ENCODE measurements at regions of chr17 and their contacts with region 1.

Region 1: DNA sequence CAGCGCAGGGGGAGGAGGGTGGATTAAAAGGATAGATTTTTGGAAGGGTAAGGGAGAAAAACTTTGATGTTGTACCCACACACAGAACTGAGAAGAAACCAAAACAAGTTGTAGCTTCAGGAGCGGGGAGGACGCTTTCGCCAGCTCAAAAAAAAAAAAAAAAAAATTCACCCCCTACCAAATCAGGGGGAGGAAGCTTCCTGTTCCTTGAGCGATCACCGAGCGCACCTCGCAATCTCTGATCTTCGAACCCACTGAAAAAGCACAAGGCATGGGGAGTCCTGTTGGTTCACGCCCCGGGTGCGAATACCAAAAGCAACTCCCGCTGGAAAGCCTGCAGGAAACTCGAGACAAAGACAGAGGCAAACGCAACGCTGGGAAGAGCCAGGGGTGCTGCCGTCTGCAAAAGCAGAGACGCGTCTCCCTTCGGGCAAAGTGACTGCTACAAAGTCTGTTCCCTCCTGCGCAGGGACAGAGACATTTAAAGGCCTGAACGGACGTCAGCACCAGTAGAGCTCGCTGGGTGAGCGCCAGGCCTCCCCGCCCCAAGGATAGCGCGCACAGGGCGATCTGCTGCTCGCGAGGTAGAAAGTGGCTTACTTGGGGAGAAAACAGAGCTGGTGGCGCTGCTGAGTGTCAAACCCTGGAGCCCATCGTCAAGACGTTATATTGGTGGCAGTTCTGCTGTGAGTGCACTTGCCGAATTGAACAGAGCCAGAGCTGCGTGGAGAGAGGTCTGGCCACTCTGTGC is 190.4 kb downstream of the USP22 start:
- DNase-seq: peak; percentile 70 to 71
- H3K4me3 ChIP-seq: peak overlapping the region; percentile 20
- H3K4me3 Mint-ChIP-seq: peak overlapping the region; percentile 75
- H3K27ac Mint-ChIP-seq: no peak overlapping the region
- H3K4me1 ChIP-seq: no peaks in the 10 kb centered on the region
- H3K4me1 Mint-ChIP-seq: peaks cover 9% of the 10 kb centered on the region
- H3K27me3 ChIP-seq: no peaks in the 10 kb centered on the region
- H3K27me3 Mint-ChIP-seq: peaks cover 20% of the 10 kb centered on the region
- CTCF ChIP-seq: peak in 1 of 2 experiments; percentile 8

Region 2: GRCh38 chr17:20226814-20227482 is 625.5 kb before region 1 on chr17:
- CTCF ChIA-PET with region 1: no interaction called
- POLR2A ChIA-PET with region 1: no interaction called
- intact Hi-C with region 1: loop called (anchors 10 kb)
- DNase-seq: peak; percentile 74 to 83
- H3K4me3 ChIP-seq: no peak overlapping the region
- H3K4me3 Mint-ChIP-seq: no peak overlapping the region
- H3K27ac Mint-ChIP-seq: peak overlapping the region; percentile 50
- H3K4me1 ChIP-seq: peaks cover 25% of the 10 kb centered on the region
- H3K4me1 Mint-ChIP-seq: peaks cover 29% of the 10 kb centered on the region
- H3K27me3 ChIP-seq: no peaks in the 10 kb centered on the region
- H3K27me3 Mint-ChIP-seq: no peaks in the 10 kb centered on the region
- CTCF ChIP-seq: peak; percentile 83 to 89

Region 3: GRCh38 chr17:20800146-20800545 is 52.3 kb before region 1 on chr17:
- CTCF ChIA-PET with region 1: interaction called, 3 read pairs
- POLR2A ChIA-PET with region 1: no interaction called
- intact Hi-C with region 1: loop called (anchors 2 kb)
- DNase-seq: no peak
- H3K4me3 ChIP-seq: no peak overlapping the region
- H3K4me3 Mint-ChIP-seq: no peak overlapping the region
- H3K27ac Mint-ChIP-seq: no peak overlapping the region
- H3K4me1 ChIP-seq: no peaks in the 10 kb centered on the region
- H3K4me1 Mint-ChIP-seq: no peaks in the 10 kb centered on the region
- H3K27me3 ChIP-seq: no peaks in the 10 kb centered on the region
- H3K27me3 Mint-ChIP-seq: no peaks in the 10 kb centered on the region
- CTCF ChIP-seq: no peak

Region 4: DNA sequence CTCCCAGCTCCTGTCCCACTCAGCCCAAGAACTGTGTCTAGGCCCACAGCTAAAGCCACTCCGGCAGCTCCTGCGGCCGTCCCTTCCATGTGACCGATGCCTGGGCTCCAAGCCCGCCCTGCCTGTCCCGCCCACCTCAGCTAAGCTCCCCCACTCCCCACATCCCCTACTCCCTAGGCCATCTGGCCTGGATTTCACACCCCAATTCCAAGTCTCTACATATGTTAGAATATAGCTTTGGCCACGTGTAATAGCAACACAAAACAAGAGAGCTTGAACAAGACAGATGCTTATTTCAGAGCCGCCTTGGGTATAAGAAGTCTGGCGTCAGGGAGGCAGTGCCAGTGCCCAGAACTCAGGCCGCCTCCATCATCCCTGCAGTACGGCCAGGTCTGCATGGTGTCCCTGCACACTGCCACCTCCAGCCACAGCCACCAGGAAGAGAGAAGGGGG is 220.4 kb after region 1 on chr17:
- CTCF ChIA-PET with region 1: no interaction called
- POLR2A ChIA-PET with region 1: no interaction called
- intact Hi-C with region 1: no loop called
- DNase-seq: no peak
- H3K4me3 ChIP-seq: no peak overlapping the region
- H3K4me3 Mint-ChIP-seq: no peak overlapping the region
- H3K27ac Mint-ChIP-seq: no peak overlapping the region
- H3K4me1 ChIP-seq: no peaks in the 10 kb centered on the region
- H3K4me1 Mint-ChIP-seq: no peaks in the 10 kb centered on the region
- H3K27me3 ChIP-seq: no peaks in the 10 kb centered on the region; the same call in 1 of the 2 replicates
- H3K27me3 Mint-ChIP-seq: no peaks in the 10 kb centered on the region
- CTCF ChIP-seq: no peak